Body of pancreas (tissue), 4 donors: ENCODE measurements at regions of chr3 and their contacts with region 1.

Region 1: GRCh38 chr3:88003115-88003755 is 55.6 kb downstream of the CGGBP1 start:
- DNase-seq: peak in 1 of 4 donors; percentile 33
- ATAC-seq: peak; percentile 78
- H3K4me3 ChIP-seq: no peak overlapping the region
- H3K27ac ChIP-seq: peak overlapping the region in 2 of 4 donors; percentile 10 to 56
- H3K4me1 ChIP-seq: peaks cover 13% of the 10 kb centered on the region
- H3K27me3 ChIP-seq: no peaks in the 10 kb centered on the region
- CTCF ChIP-seq: peak; percentile 66 to 80 (median 77)
- POLR2A ChIP-seq: no peak

Region 2: DNA sequence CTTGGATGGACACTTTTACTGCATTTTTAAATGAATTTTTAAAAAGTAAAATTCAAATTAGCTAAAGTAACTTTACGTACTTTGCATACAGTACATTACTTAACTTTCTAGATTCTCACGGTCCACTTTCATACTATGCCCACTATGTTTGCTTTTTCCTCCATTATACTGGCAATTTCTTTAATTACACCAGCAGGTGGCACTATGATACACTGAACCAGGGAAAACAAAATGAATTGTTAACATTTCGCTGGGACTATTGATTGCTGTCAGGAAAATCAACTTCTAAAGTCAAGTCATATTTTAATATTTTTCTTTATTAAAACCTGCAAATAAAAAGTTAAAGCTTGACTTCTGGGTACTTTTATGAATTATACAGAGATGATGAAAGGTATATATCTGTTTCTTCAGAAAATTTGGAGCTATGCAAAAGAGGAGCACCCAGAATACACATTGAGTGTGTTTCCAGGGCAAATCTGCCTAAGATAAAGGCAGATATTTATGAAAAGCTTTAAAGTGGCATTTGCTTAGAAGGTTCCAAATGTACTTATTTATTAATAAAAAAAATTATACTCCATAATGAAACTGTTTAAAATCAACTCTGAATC is 705.0 kb before region 1 on chr3:
- intact Hi-C with region 1: loop called (anchors 5 kb)
- DNase-seq: no peak
- ATAC-seq: peak; percentile 83
- H3K4me3 ChIP-seq: no peak overlapping the region
- H3K27ac ChIP-seq: no peak overlapping the region
- H3K4me1 ChIP-seq: no peaks in the 10 kb centered on the region
- H3K27me3 ChIP-seq: no peaks in the 10 kb centered on the region
- CTCF ChIP-seq: peak; percentile 49 to 86 (median 83)
- POLR2A ChIP-seq: no peak

Region 3: DNA sequence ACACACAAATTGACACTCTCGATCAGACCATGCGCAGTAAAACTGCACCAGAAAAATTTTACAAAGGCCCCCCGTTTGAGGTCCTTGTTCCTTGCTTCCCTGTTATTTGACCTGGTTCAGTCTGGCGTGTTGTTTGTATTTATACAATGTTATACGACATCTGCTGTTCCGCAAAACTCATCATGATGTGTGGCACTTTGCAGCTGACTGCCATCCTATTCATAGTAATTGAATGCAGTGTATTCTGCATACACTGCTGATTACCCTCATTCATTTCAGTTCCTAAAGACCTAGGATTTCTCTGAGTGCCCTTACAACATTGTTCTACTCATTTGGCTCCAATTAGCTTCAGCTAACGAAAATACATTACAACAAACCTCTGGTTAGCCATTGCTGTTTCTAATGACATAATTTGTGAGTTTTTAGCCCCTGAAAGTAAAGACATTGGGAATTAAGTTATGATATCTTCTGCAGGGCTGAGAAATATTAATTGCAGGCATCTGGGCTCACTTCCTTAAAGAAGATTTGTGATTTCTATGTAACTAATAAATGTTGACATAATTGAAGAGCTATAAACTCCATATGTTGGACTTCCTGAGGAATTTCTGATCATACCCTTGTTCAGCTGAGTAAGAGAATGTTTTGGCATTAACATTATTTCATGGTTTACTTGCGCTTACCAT is 222.2 kb after region 1 on chr3:
- intact Hi-C with region 1: no loop called
- DNase-seq: no peak
- ATAC-seq: no peak
- H3K4me3 ChIP-seq: no peak overlapping the region
- H3K27ac ChIP-seq: no peak overlapping the region
- H3K4me1 ChIP-seq: no peaks in the 10 kb centered on the region
- H3K27me3 ChIP-seq: no peaks in the 10 kb centered on the region
- CTCF ChIP-seq: no peak
- POLR2A ChIP-seq: no peak